CD4-positive, alpha-beta T cell (primary cell): ENCODE measurements at regions of chr1 and their contacts with region 1.

Region 1: GRCh38 chr1:201042779-201043461 is 19.4 kb upstream of the KIF21B start:
- DNase-seq: peak; percentile 60 to 86 (median 66)
- ATAC-seq: peak; percentile 99
- H3K4me3 ChIP-seq: no peak overlapping the region
- H3K4me3 Mint-ChIP-seq: no peak overlapping the region
- H3K27ac ChIP-seq: no peak overlapping the region
- H3K27ac Mint-ChIP-seq: no peak overlapping the region
- H3K4me1 ChIP-seq: peaks cover 7% of the 10 kb centered on the region
- H3K4me1 Mint-ChIP-seq: peaks cover 6% of the 10 kb centered on the region
- H3K27me3 ChIP-seq: no peaks in the 10 kb centered on the region
- H3K27me3 Mint-ChIP-seq: no peaks in the 10 kb centered on the region
- CTCF ChIP-seq: peak; percentile 90

Region 2: DNA sequence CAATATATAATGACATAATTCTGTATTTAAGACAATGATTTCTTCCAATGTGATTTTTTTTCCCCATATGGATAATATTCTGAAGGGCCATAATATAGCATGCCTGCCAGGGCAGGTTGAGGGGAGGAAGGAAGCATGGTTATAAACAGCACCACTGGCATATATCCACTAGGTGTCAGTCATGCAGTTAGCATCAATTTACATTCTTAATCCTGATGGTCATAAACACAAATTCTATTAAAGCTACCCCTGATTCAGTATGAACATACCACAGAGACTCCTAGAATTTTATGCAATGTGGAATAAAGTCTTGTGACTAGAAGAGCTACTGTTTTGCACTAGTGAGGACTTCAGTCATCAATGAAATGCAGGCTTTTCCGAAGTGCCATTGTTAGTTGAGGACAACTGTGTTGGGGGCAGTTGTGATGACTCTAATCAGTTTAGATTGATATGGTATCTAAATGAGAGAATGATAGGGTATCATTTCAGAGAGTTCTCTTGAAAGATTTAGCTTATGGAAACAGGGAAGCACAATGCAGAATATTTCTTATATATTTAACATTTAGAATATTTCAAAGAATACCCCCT is 1358.1 kb before region 1 on chr1:
- CTCF ChIA-PET with region 1: no interaction called
- POLR2A ChIA-PET with region 1: no interaction called
- intact Hi-C with region 1: loop called in 1 of 2 experiments (anchors 10 kb)
- DNase-seq: peak in 4 of 14 experiments; percentile 11 to 60 (median 46)
- ATAC-seq: peak; percentile 74
- H3K4me3 ChIP-seq: no peak overlapping the region
- H3K4me3 Mint-ChIP-seq: no peak overlapping the region
- H3K27ac ChIP-seq: no peak overlapping the region
- H3K27ac Mint-ChIP-seq: no peak overlapping the region
- H3K4me1 ChIP-seq: no peaks in the 10 kb centered on the region
- H3K4me1 Mint-ChIP-seq: no peaks in the 10 kb centered on the region
- H3K27me3 ChIP-seq: no peaks in the 10 kb centered on the region
- H3K27me3 Mint-ChIP-seq: peaks cover 8% of the 10 kb centered on the region
- CTCF ChIP-seq: peak; percentile 72

Region 3: GRCh38 chr1:200620273-200621131 is 422.4 kb before region 1 on chr1 and contains the start of gene KIF14:
- CTCF ChIA-PET with region 1: interaction called, 3 read pairs
- POLR2A ChIA-PET with region 1: no interaction called
- intact Hi-C with region 1: loop called (anchors 1 to 2 kb)
- DNase-seq: peak; percentile 78 to 95 (median 88)
- ATAC-seq: peak; percentile 95
- H3K4me3 ChIP-seq: peak within 1 kb of the TSS; percentile 83
- H3K4me3 Mint-ChIP-seq: peak within 1 kb of the TSS; percentile 98
- H3K27ac ChIP-seq: peak within 1 kb of the TSS; percentile 23 to 52
- H3K27ac Mint-ChIP-seq: peak within 1 kb of the TSS; percentile 90
- H3K4me1 ChIP-seq: peaks cover 19% of the 10 kb centered on the region
- H3K4me1 Mint-ChIP-seq: peaks cover 31% of the 10 kb centered on the region
- H3K27me3 ChIP-seq: no peaks in the 10 kb centered on the region
- H3K27me3 Mint-ChIP-seq: no peaks in the 10 kb centered on the region
- CTCF ChIP-seq: no peak
- total RNA-seq, gene KIF14: 0.11 TPM

Region 4: DNA sequence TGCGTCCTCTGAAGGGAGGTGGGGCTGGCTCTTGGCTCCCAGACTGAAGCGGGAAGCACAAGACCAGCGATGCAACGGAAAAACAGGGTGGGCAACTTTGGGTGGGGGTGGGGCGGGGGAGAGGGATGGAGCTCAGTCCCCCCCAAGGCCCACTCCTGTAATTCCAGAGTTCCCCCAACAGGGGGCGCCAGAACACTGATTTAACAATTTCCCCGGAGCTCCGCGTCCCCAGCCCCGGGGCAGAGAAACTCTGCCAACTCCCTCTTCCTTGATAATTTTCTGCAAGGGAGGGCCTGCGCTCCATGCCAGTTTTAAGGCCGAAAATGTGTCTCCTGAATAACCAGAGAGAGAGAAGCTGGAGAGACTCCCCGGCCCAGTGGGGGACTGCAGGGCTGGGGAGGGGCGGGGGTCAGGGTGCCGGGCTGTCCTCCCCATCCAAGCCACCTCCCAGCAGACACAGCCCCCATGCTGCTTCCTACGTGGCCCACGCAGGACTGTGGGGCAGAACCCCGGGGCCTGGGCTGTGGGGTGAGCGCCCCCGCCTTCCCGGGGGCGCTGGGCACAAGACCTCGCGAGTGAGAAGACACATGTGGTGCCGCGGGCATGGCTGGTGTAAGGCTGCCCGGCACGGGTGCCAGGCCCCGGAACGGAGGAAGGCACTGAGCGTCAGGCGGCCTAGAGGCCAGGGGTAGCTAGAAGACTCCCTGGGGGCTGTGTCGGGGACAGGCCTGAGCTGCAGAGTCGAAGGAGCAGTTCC is 70.8 kb before region 1 on chr1:
- CTCF ChIA-PET with region 1: interaction called, 36 read pairs
- POLR2A ChIA-PET with region 1: interaction called, 11 read pairs
- intact Hi-C with region 1: loop called (anchors 1 kb)
- DNase-seq: peak; percentile 55 to 77 (median 62)
- ATAC-seq: peak; percentile 76
- H3K4me3 ChIP-seq: no peak overlapping the region
- H3K4me3 Mint-ChIP-seq: no peak overlapping the region
- H3K27ac ChIP-seq: no peak overlapping the region
- H3K27ac Mint-ChIP-seq: no peak overlapping the region
- H3K4me1 ChIP-seq: peaks cover 3% of the 10 kb centered on the region
- H3K4me1 Mint-ChIP-seq: no peaks in the 10 kb centered on the region
- H3K27me3 ChIP-seq: no peaks in the 10 kb centered on the region
- H3K27me3 Mint-ChIP-seq: no peaks in the 10 kb centered on the region
- CTCF ChIP-seq: peak; percentile 99

Region 5: GRCh38 chr1:201114236-201115131 is 71.6 kb after region 1 on chr1:
- CTCF ChIA-PET with region 1: interaction called, 5 read pairs
- POLR2A ChIA-PET with region 1: no interaction called
- intact Hi-C with region 1: loop called in 1 of 2 experiments (anchors 5 kb)
- DNase-seq: peak; percentile 45 to 86 (median 64)
- ATAC-seq: peak; percentile 87
- H3K4me3 ChIP-seq: peak overlapping the region; percentile 84
- H3K4me3 Mint-ChIP-seq: peak overlapping the region; percentile 95
- H3K27ac ChIP-seq: peak overlapping the region; percentile 13 to 32
- H3K27ac Mint-ChIP-seq: peak overlapping the region; percentile 76
- H3K4me1 ChIP-seq: peaks cover 16% of the 10 kb centered on the region
- H3K4me1 Mint-ChIP-seq: peaks cover 30% of the 10 kb centered on the region
- H3K27me3 ChIP-seq: no peaks in the 10 kb centered on the region
- H3K27me3 Mint-ChIP-seq: no peaks in the 10 kb centered on the region
- CTCF ChIP-seq: peak; percentile 77